ENCODE measurements at regions of chr10 and their contacts with region 1.

Region 1: DNA sequence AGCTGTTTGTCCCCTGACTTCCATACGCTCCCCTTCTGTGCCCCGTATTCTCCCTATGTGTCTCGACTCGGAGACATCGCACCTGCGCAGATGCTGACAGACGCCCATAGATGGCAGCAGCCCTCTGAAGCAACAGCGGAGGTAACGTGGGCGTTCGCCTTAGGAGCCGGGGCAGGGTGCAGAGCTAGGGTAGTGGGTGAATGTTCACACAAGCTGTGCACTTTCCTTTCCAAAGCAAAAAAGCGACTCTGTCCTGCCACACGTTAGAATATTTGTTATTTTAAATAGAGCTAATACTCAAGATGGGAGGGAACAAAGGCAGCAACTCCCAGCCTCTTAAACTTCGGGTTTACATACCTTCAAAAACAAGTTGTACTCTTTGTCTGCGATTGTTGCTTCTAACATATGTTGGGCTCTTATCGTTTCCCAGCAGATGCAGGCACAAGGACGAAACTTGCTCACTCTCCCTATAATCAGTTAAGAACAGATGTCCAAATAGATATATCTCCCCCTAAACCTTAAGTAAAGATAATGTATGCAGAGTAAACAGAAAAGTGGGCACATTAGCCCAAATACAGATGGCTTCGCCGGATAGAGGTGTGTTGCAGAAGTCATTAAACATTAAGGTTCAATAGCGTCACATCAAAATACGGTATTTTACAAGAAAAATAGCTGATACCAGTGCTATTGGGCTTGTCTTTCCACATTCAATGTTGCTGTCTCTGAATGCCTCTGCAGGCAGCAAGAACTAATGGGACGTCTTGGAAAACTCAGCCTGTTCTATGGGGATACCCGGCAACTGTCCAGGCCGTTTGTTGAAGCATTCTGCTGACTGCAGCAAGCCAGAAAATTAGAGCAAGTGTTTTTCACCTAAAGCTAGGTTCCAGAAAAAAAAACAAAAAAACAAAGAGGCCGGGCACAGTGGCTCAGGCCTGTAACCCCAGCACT is 340.3 kb upstream of the PRKCQ start:
- DNase-seq: peak; percentile 86
- H3K4me3 ChIP-seq: no peak overlapping the region
- H3K27ac ChIP-seq: no peak overlapping the region
- H3K4me1 ChIP-seq: peaks cover 33% of the 10 kb centered on the region
- CTCF ChIP-seq: peak; percentile 94

Region 2: DNA sequence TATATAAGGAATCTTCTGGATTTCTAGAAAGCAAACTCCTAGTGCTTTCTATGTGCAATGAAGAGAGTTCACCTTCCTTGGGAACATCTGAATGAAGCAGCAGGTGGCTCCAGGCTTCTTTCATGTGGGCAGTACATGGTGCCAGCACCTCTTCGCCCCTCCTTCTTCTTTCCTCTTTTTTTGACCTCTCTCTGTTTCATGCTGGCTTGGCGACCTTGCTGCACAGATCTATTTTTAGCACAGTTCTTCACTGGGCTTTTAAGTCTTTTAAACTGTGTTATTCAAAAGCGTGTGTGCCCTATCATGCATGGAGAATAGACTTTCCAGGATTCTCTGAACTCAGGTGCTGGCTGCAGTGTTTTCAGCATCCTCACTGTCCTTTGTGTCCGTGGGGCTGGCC is 60.0 kb after region 1 on chr10:
- CTCF ChIA-PET with region 1: interaction called, 12 read pairs
- POLR2A ChIA-PET with region 1: interaction called, 5 read pairs
- intact Hi-C with region 1: loop called (anchors 1 kb)
- DNase-seq: peak; percentile 19
- H3K4me3 ChIP-seq: no peak overlapping the region
- H3K27ac ChIP-seq: no peak overlapping the region
- H3K4me1 ChIP-seq: peaks cover 4% of the 10 kb centered on the region
- CTCF ChIP-seq: no peak

Region 3: DNA sequence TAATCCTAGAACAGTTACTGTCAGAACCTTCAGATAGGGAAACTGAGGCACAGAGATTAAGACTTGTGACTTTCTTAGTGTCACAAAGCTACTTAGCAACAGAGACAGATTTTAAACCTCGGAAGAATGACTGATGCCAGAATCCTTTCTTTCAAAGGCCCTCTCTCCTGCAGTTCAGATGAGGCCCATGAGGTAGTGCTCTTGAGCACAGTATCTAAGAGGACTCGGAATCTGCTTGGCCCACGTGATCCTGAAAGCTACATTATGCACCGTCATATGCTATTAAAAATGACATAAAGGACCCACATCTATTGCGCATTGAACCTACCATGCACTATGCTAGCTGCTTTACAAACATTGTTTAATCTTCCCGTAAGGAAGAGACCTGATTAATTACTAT is 134.6 kb after region 1 on chr10:
- CTCF ChIA-PET with region 1: no interaction called
- POLR2A ChIA-PET with region 1: no interaction called
- intact Hi-C with region 1: loop called (anchors 10 kb)
- DNase-seq: peak; percentile 24
- H3K4me3 ChIP-seq: no peak overlapping the region
- H3K27ac ChIP-seq: no peak overlapping the region
- H3K4me1 ChIP-seq: no peaks in the 10 kb centered on the region
- CTCF ChIP-seq: peak; percentile 65; the same call in 1 of the 2 replicates

Region 4: GRCh38 chr10:7121154-7121810 is 200.9 kb after region 1 on chr10:
- CTCF ChIA-PET with region 1: no interaction called
- POLR2A ChIA-PET with region 1: interaction called, 6 read pairs
- intact Hi-C with region 1: loop called (anchors 5 kb)
- DNase-seq: peak; percentile 78
- H3K4me3 ChIP-seq: no peak overlapping the region
- H3K27ac ChIP-seq: no peak overlapping the region
- H3K4me1 ChIP-seq: peaks cover 4% of the 10 kb centered on the region
- CTCF ChIP-seq: peak; percentile 98

Region 5: GRCh38 chr10:7410862-7411670 is 490.7 kb after region 1 on chr10 and contains the start of gene SFMBT2:
- CTCF ChIA-PET with region 1: interaction called, 3 read pairs
- POLR2A ChIA-PET with region 1: interaction called, 10 read pairs
- intact Hi-C with region 1: loop called (anchors 2 kb)
- DNase-seq: peak; percentile 77
- H3K4me3 ChIP-seq: peak within 1 kb of the TSS; percentile 95
- H3K27ac ChIP-seq: no peak within 1 kb of the TSS
- H3K4me1 ChIP-seq: peaks cover 16% of the 10 kb centered on the region
- CTCF ChIP-seq: no peak
- total RNA-seq, gene SFMBT2: 5.1 and 7.9 TPM in 2 replicates

Region 6: GRCh38 chr10:7417103-7417623 is 496.8 kb after region 1 on chr10:
- CTCF ChIA-PET with region 1: no interaction called
- POLR2A ChIA-PET with region 1: interaction called, 6 read pairs
- intact Hi-C with region 1: loop called (anchors 2 kb)
- DNase-seq: peak; percentile 61
- H3K4me3 ChIP-seq: no peak overlapping the region
- H3K27ac ChIP-seq: no peak overlapping the region
- H3K4me1 ChIP-seq: peaks cover 3% of the 10 kb centered on the region
- CTCF ChIP-seq: peak; percentile 98